ENCODE measurements at regions of chr10 and their contacts with region 1.

Region 1: GRCh38 chr10:97463363-97464132 is 17.6 kb downstream of the ZDHHC16 start:
- DNase-seq: no peak
- H3K4me3 ChIP-seq: no peak overlapping the region
- H3K27ac ChIP-seq: peak overlapping the region; percentile 76
- H3K4me1 ChIP-seq: peaks cover 30% of the 10 kb centered on the region
- H3K27me3 ChIP-seq: no peaks in the 10 kb centered on the region
- CTCF ChIP-seq: peak; percentile 61 to 85 (median 80)
- POLR2A ChIP-seq: no peak

Region 2: GRCh38 chr10:97543025-97543575 is 79.6 kb after region 1 on chr10:
- intact Hi-C with region 1: loop called (anchors 2 kb)
- DNase-seq: peak in 1 of 2 donors; percentile 97
- H3K4me3 ChIP-seq: peak overlapping the region in 1 of 2 donors; percentile 23
- H3K27ac ChIP-seq: peak overlapping the region; percentile 93
- H3K4me1 ChIP-seq: peaks cover 61% of the 10 kb centered on the region
- H3K27me3 ChIP-seq: no peaks in the 10 kb centered on the region
- CTCF ChIP-seq: peak in 1 of 3 experiments; percentile 4
- POLR2A ChIP-seq: no peak

Region 3: DNA sequence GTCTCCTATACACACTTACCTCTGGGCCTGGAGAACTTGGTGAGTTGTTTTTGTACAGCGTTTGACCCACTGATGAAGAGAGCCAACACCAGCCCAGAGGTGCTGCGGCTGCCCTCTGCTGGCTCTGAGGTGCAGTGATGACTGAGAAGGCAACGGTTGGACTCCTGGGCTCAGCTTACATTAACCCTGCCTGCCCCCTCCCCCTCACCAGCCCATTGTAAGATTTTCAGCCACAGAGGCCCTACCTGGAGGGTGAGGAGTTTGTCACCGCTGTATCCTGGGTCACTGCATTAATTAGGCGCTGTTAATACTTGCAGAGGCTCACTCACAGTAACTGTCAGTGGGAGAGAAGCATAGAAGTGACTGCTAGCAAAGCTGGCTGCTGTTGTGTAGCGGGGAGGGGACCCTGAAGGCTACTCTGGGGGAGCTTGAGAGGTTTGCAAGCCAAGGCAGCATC is 90.1 kb after region 1 on chr10:
- intact Hi-C with region 1: loop called (anchors 2 kb)
- DNase-seq: no peak
- H3K4me3 ChIP-seq: no peak overlapping the region
- H3K27ac ChIP-seq: peak overlapping the region; percentile 11
- H3K4me1 ChIP-seq: peaks cover 32% of the 10 kb centered on the region
- H3K27me3 ChIP-seq: no peaks in the 10 kb centered on the region
- CTCF ChIP-seq: peak; percentile 61 to 80 (median 66)
- POLR2A ChIP-seq: no peak

Measured in vagina (tissue), 2 donors.